Mammary epithelial cell (primary cell): ENCODE measurements at regions of chr10 and their contacts with region 1.

Region 1: GRCh38 chr10:119199231-119199992 is 8.0 kb upstream of the GRK5 start:
- DNase-seq: peak; percentile 58
- H3K4me3 ChIP-seq: no peak overlapping the region
- H3K27ac ChIP-seq: no peak overlapping the region
- H3K4me1 ChIP-seq: peaks cover 40% of the 10 kb centered on the region
- H3K27me3 ChIP-seq: no peaks in the 10 kb centered on the region
- CTCF ChIP-seq: peak; percentile 77 to 82

Region 2: GRCh38 chr10:119058010-119058409 is 141.4 kb before region 1 on chr10:
- CTCF ChIA-PET with region 1: no interaction called
- dilution Hi-C with region 1: no loop called
- in situ Hi-C with region 1: no loop called
- intact Hi-C with region 1: no loop called
- DNase-seq: no peak
- H3K4me3 ChIP-seq: no peak overlapping the region
- H3K27ac ChIP-seq: no peak overlapping the region
- H3K4me1 ChIP-seq: no peaks in the 10 kb centered on the region
- H3K27me3 ChIP-seq: no peaks in the 10 kb centered on the region
- CTCF ChIP-seq: no peak

Region 3: GRCh38 chr10:119139464-119140067 is 59.8 kb before region 1 on chr10:
- CTCF ChIA-PET with region 1: no interaction called
- dilution Hi-C with region 1: no loop called
- in situ Hi-C with region 1: no loop called
- intact Hi-C with region 1: loop called (anchors 1 kb)
- DNase-seq: peak; percentile 16
- H3K4me3 ChIP-seq: no peak overlapping the region
- H3K27ac ChIP-seq: no peak overlapping the region
- H3K4me1 ChIP-seq: no peaks in the 10 kb centered on the region
- H3K27me3 ChIP-seq: no peaks in the 10 kb centered on the region
- CTCF ChIP-seq: peak; percentile 69 to 72

Region 4: GRCh38 chr10:119253433-119254174 is 54.2 kb after region 1 on chr10:
- CTCF ChIA-PET with region 1: no interaction called
- dilution Hi-C with region 1: no loop called
- in situ Hi-C with region 1: no loop called
- intact Hi-C with region 1: no loop called
- DNase-seq: peak; percentile 69
- H3K4me3 ChIP-seq: no peak overlapping the region
- H3K27ac ChIP-seq: peak overlapping the region; percentile 48
- H3K4me1 ChIP-seq: peaks cover 15% of the 10 kb centered on the region
- H3K27me3 ChIP-seq: no peaks in the 10 kb centered on the region
- CTCF ChIP-seq: no peak

Region 5: GRCh38 chr10:119416855-119417254 is 217.4 kb after region 1 on chr10:
- CTCF ChIA-PET with region 1: interaction called, 5 read pairs
- dilution Hi-C with region 1: no loop called
- in situ Hi-C with region 1: loop called (anchors 5 to 10 kb)
- intact Hi-C with region 1: loop called (anchors 1 kb)
- DNase-seq: peak; percentile 41
- H3K4me3 ChIP-seq: no peak overlapping the region
- H3K27ac ChIP-seq: no peak overlapping the region
- H3K4me1 ChIP-seq: no peaks in the 10 kb centered on the region
- H3K27me3 ChIP-seq: no peaks in the 10 kb centered on the region
- CTCF ChIP-seq: peak; percentile 74 to 91

Region 6: GRCh38 chr10:119489991-119490326 is 290.5 kb after region 1 on chr10:
- CTCF ChIA-PET with region 1: no interaction called
- dilution Hi-C with region 1: no loop called
- in situ Hi-C with region 1: no loop called
- intact Hi-C with region 1: loop called (anchors 2 kb)
- DNase-seq: no peak
- H3K4me3 ChIP-seq: no peak overlapping the region
- H3K27ac ChIP-seq: no peak overlapping the region
- H3K4me1 ChIP-seq: no peaks in the 10 kb centered on the region
- H3K27me3 ChIP-seq: no peaks in the 10 kb centered on the region
- CTCF ChIP-seq: no peak

Region 7: DNA sequence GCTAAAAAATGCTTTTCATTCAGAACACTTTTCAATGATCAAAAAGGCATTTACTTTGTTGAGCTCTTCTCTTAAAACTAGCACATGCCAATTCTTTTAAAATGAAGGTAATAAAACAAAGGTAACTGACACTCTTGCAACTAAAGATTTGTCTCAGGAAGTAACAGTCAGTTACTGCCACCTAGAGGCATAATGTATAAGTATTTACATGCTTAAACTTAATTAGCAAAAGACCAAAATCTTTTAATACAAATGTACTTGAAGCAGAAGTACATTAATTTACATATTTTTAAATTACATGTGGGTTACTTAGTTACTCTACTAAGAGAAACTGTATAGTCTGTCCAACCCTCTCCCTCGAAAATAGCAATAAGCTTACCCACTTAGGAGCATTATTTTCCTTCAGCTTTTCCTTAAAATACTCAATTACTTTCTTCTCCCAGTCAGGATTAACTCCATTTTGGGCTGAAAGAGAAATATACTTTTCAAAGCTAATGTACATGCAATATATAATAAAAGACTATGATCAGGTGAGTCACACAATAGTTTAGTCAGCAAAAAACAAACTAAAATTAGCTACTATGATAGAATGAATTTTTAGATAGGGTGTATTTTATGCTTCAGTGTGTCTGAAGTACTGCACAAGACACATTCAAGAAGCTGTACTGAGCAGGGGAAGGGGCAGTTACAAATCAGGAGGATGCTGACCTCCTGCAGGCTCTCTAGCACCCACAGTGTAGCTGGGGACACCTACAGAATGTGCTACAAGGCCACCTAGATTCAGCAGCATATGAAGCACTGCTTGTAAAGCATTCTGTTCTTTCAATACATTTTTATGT is 660.2 kb after region 1 on chr10:
- CTCF ChIA-PET with region 1: no interaction called
- dilution Hi-C with region 1: no loop called
- in situ Hi-C with region 1: no loop called
- intact Hi-C with region 1: loop called (anchors 2 kb)
- DNase-seq: peak; percentile 27
- H3K4me3 ChIP-seq: no peak overlapping the region
- H3K27ac ChIP-seq: no peak overlapping the region
- H3K4me1 ChIP-seq: no peaks in the 10 kb centered on the region
- H3K27me3 ChIP-seq: no peaks in the 10 kb centered on the region
- CTCF ChIP-seq: peak; percentile 47 to 60